GM10248 (cell line): ENCODE measurements at regions of chr3 and their contacts with region 1.

Region 1: GRCh38 chr3:156102267-156102931 is 18.0 kb upstream of the KCNAB1 start:
- DNase-seq: no peak
- CTCF ChIP-seq: no peak

Region 2: DNA sequence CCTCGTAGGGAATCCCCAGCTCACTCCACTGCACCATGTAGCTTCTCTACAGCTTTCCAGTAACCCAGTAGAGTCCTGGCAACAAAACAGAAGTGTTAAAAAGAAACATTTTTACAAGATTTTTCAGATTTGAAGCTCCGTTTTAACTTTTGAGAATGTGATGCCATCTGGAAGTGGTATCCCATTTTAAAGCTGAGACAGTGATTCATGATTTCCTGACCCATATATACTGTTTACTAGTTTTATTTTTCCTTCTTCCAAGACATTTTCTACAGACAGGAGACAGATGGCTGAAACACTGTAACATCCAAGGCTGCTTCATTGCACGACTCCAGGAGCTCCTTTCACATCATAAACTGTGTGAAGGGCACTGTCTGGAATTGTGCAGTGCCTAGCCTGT is 12.3 kb before region 1 on chr3:
- CTCF ChIA-PET with region 1: interaction called, 16 read pairs
- POLR2A ChIA-PET with region 1: no interaction called
- DNase-seq: no peak
- CTCF ChIP-seq: no peak

Region 3: DNA sequence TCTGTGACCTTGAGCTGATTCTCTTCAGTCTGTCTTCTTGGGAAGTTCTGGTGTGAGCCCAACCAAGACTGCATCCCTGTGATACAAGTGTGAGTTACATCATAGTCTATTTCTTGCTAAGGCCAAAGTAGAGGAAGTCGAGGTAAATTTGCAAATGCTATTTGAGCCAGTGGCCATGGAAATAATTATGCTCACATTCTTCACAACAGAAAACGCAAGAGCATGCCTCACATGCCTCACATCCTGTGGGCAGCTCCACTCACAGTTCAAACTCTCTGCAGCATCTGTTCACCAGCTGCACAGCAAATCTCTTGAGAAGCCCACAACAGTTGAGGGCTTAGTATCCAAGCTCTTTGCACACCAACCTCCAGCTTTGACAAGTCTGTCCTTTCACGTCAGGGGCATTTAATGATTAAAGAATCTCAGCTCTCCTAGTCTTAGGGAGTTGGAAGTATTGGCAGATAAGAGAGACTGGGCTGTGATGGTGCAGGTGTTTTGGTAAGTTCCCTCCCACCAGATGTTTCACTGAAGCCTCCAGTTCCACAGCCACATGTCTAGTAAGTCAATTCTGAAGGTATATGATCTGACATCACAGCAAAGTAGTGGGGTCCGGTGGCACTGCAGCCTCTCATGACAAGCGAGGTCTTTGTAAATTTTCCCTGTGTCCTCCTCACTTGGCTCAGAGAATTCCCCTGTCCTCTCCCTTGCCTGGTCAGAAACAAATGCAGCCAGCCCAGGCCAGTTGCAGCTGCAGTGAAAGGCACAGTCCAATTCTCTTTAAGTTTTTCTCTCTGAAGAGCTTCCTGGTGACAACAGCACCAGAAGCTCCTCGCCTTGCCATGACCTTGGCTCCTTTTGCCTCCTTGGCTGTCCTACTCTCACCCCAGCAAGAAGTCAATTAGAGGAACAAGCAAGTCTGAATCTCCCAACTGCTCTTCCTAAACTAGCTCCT is 286.4 kb after region 1 on chr3:
- CTCF ChIA-PET with region 1: no interaction called
- POLR2A ChIA-PET with region 1: no interaction called
- DNase-seq: no peak
- CTCF ChIP-seq: no peak